Sciatic nerve (tissue), 2 donors: ENCODE measurements at regions of chr9 and their contacts with region 1.

Region 1: GRCh38 chr9:35116898-35117551 is 1.4 kb upstream of the ATOSB start:
- DNase-seq: peak; percentile 95
- ATAC-seq: peak; percentile 87

Region 2: DNA sequence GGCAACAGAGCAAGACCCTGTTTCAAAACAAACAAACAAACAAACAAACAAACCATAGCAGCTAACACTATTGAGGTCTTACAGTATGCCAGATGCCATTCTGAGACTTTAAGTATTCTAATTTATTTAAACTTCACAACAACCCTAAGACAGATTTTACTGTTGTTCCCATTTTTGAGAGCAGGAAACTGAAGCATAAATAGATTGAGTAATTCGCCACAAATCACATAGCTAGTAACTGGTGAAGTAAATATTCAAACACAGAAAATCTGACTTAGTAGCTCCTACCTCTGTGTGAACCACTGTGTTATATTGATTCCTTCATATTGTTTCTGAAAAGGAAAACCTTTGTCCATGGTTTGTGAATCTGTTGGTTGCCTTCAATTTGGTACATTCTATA is 143.2 kb after region 1 on chr9:
- intact Hi-C with region 1: loop called (anchors 5 kb)
- DNase-seq: no peak
- ATAC-seq: no peak

Region 3: DNA sequence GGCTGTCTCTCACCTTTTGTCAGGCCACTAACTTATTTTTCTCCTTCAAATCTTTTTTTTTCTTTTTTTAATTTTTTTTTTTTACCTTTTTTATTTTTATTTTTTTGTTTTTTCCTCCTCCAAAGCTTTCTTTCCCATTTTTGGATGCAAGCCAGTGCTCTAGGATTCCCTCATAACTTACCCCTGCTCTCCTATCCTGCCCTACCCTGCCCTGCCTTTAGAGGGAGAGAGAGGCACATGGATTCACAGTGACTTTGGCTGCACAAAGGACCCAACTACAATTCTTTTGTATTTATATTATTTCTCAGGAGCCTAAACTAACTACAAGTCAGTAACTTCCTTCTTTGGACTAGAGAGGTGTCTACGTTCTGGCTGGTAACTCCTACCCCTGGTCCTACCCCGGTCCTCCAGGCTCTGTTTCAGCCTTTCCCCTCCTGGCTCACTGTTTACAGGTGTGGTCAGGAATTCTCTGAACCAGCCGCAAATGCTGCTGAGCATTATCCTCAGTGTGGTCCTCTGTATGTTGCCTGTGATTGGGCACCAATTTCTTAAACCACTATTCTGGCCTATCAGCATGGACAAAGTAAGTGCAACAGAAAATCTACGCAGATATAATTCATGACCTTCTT is 364.4 kb after region 1 on chr9:
- intact Hi-C with region 1: loop called (anchors 5 kb)
- DNase-seq: no peak
- ATAC-seq: peak; percentile 70